PC-9 (cell line): ENCODE measurements at regions of chr22 and their contacts with region 1.

Region 1: GRCh38 chr22:35761037-35761436 is 43.4 kb downstream of the APOL5 start:
- DNase-seq: no peak
- H3K4me3 ChIP-seq: no peak overlapping the region
- H3K27ac ChIP-seq: no peak overlapping the region
- H3K4me1 ChIP-seq: 0 out of 2 replicates have a peak, but pooled peaks cover 3% of the 10 kb centered on the region
- H3K27me3 ChIP-seq: no peaks in the 10 kb centered on the region
- CTCF ChIP-seq: peak; percentile 43; the same call in 1 of the 2 replicates

Region 2: GRCh38 chr22:35288116-35288515 is 472.9 kb before region 1 on chr22:
- CTCF ChIA-PET with region 1: no interaction called
- POLR2A ChIA-PET with region 1: interaction called, 10 read pairs
- intact Hi-C with region 1: no loop called
- DNase-seq: no peak
- H3K4me3 ChIP-seq: no peak overlapping the region
- H3K27ac ChIP-seq: no peak overlapping the region
- H3K4me1 ChIP-seq: no peaks in the 10 kb centered on the region
- H3K27me3 ChIP-seq: no peaks in the 10 kb centered on the region
- CTCF ChIP-seq: no peak